HEK293 (cell line): ENCODE measurements at regions of chr10 and their contacts with region 1.

Region 1: DNA sequence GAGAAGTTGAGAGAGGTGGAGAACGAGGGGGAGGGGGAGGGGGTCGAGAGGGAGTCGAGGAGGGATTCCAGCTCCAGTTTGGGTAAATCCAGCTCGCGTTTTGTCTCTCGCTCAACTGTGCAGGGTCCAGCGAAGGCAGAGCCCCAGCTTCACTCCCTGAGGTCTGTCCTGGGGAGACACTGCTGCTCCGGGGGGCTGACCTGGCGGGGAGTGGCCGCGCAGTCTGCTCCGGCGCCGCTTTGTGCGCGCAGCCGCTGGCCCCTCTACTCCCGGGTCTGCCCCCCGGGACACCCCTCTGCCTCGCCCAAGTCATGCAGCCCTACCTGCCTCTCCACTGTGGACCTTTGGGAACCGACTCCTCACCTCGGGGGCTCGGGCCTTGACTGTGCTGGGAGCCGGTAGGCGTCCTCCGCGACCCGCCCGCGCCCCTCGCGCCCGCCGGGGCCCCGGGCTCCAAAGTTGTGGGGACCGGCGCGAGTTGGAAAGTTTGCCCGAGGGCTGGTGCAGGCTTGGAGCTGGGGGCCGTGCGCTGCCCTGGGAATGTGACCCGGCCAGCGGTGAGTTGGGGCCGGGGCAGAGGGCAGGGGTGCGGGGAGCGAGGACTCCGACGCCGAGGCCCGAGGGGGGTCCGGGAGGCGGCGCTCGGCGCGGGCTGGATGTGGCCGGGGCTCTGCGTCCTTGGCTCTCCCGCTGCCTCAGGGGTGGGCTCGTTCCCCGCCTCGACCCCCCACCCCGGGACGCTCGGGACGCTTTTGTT is at the start of gene TET1:
- H3K4me3 ChIP-seq: peak within 1 kb of the TSS; percentile 85
- H3K27ac ChIP-seq: peak within 1 kb of the TSS; percentile 81; the same call in 1 of the 2 replicates
- H3K4me1 ChIP-seq: no peaks in the 10 kb centered on the region; the same call in 1 of the 2 replicates
- CTCF ChIP-seq: no peak

Region 2: GRCh38 chr10:68516766-68517165 is 43.6 kb before region 1 on chr10:
- CTCF ChIA-PET with region 1: no interaction called
- POLR2A ChIA-PET with region 1: no interaction called
- H3K4me3 ChIP-seq: no peak overlapping the region
- H3K27ac ChIP-seq: no peak overlapping the region
- H3K4me1 ChIP-seq: no peaks in the 10 kb centered on the region
- CTCF ChIP-seq: no peak

Region 3: DNA sequence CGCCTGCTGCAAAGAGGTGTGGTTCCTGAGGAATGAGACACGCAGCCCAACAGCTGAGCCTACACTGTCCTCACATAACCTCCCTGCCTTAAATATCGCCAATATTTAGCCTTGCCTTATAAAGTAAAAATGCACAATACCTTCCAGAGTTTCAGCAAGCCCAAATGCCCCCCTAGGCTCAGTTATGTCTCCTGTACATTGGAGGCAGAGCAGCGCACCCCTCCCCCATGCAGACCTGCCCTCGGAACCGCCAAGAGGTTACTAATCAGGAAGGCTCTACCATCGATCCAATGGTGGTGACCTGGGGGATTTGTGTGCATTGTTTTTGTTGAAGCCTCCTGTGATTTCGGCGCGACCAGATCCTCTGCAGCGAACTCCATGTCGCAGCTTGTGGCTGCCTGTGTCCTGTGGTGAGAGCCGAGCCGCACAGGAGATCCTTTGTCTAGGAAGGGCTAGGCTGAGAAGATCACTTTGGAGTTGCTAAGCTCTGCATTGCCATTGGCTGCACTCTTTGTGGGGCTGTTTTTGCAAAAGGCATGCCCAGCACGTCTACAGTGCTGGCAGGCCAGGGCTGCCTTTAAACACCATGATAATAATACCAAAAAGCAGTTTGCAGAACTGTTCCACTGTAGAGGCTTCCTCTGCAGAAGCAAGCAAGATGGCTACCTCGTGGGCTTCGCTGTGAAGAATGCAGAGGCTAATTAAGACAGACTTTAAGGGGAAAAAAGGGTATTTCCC is 39.8 kb after region 1 on chr10:
- CTCF ChIA-PET with region 1: no interaction called
- POLR2A ChIA-PET with region 1: interaction called, 34 read pairs
- H3K4me3 ChIP-seq: peak overlapping the region; percentile 47
- H3K27ac ChIP-seq: peak overlapping the region; percentile 35
- H3K4me1 ChIP-seq: peaks cover 13% of the 10 kb centered on the region
- CTCF ChIP-seq: no peak